ENCODE measurements at regions of chr11 and their contacts with region 1.

Region 1: DNA sequence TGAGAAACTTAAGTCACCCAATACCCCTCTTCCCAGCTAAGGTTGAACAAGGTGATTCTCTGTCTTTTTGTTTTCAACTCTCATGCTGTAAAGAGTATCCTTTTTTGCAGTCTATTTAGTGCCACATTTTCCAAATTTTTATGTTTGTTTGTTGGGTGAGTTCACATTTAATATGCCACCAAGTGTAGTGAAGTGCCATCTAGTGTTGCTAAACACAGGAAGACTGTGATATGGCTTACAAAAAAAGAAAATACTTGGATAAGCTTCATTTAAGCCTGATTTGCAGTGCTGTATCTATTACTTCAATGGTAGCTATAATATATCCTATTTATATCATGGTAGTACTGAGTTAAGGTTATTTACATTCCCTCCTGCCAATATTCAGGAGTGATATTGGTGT is 319.2 kb upstream of the CHORDC1 start:
- DNase-seq: no peak
- ATAC-seq: no peak
- H3K4me3 ChIP-seq: no peak overlapping the region
- H3K27ac ChIP-seq: no peak overlapping the region
- H3K4me1 ChIP-seq: no peaks in the 10 kb centered on the region
- H3K27me3 ChIP-seq: no peaks in the 10 kb centered on the region
- CTCF ChIP-seq: no peak
- POLR2A ChIP-seq: no peak
- RAD21 ChIP-seq: no peak

Region 2: DNA sequence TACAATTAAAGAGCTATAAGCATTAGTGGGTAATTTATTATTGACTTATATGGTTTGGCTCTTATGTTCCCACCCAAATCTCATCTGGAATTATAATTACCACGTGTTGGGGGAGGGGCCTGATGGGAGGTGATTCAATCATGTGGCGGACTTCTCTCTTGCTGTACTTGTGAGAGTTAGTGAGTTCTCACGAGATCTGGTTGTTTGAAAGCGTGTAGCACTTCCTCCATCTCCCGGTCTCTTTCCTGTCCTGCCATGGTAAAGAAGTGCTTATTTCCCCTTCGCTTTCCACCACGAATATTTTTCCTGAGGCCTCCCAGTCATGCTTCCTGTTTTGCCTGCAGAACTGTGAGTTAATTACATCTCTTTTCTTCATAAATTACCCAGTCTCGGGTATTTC is 291.1 kb before region 1 on chr11:
- CTCF ChIA-PET with region 1: no interaction called
- POLR2A ChIA-PET with region 1: no interaction called
- dilution Hi-C with region 1: no loop called
- in situ Hi-C with region 1: no loop called
- intact Hi-C with region 1: no loop called
- DNase-seq: no peak
- ATAC-seq: no peak
- H3K4me3 ChIP-seq: no peak overlapping the region
- H3K27ac ChIP-seq: no peak overlapping the region
- H3K4me1 ChIP-seq: no peaks in the 10 kb centered on the region
- H3K27me3 ChIP-seq: no peaks in the 10 kb centered on the region
- CTCF ChIP-seq: no peak
- POLR2A ChIP-seq: no peak
- RAD21 ChIP-seq: no peak

Region 3: GRCh38 chr11:90884181-90884580 is 342.1 kb after region 1 on chr11:
- CTCF ChIA-PET with region 1: no interaction called
- POLR2A ChIA-PET with region 1: no interaction called
- dilution Hi-C with region 1: no loop called
- in situ Hi-C with region 1: no loop called
- intact Hi-C with region 1: no loop called
- DNase-seq: no peak
- ATAC-seq: no peak
- H3K4me3 ChIP-seq: no peak overlapping the region
- H3K27ac ChIP-seq: no peak overlapping the region
- H3K4me1 ChIP-seq: no peaks in the 10 kb centered on the region
- H3K27me3 ChIP-seq: no peaks in the 10 kb centered on the region
- CTCF ChIP-seq: no peak
- POLR2A ChIP-seq: no peak
- RAD21 ChIP-seq: no peak

Region 4: DNA sequence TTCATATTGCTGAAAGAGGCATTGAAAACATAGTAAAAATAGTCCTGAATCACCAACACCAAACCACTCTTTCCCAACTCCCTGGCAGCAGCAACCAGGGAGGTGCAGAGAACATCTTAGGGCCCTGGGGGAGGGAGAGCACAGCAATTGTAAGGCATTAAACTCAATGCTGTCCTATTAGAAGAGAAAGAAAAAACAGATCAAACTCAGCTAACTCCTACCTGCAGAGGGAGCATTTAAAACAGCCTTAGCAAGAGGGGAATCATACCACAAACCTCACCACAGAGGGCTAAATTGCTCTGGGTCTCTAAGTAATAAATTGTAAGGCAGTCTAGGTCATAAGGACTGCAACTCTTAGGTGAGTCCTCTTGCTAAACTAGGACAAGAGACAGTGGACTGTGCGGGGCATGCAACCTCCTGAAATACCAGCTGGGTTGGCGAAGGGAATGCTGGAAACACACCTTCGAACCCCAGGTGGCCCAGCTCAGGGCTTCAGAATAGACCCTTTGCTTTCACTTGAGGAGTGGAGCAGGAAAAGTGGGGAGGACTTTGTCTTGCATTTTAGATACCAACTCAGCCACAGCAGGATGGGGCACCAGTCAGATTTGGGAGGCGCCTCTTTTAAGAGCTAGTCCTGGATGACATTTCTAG is 985.4 kb after region 1 on chr11:
- CTCF ChIA-PET with region 1: no interaction called
- POLR2A ChIA-PET with region 1: no interaction called
- dilution Hi-C with region 1: no loop called
- in situ Hi-C with region 1: no loop called
- intact Hi-C with region 1: loop called (anchors 10 kb)
- DNase-seq: no peak
- ATAC-seq: no peak
- H3K4me3 ChIP-seq: no peak overlapping the region
- H3K27ac ChIP-seq: no peak overlapping the region
- H3K4me1 ChIP-seq: no peaks in the 10 kb centered on the region
- H3K27me3 ChIP-seq: no peaks in the 10 kb centered on the region
- CTCF ChIP-seq: no peak
- POLR2A ChIP-seq: no peak
- RAD21 ChIP-seq: no peak